T-cell (primary cell): ENCODE measurements at regions of chr10 and their contacts with region 1.

Region 1: GRCh38 chr10:99888622-99889021 is 106.2 kb downstream of the ABCC2 start:
- DNase-seq: no peak
- ATAC-seq: no peak
- H3K4me3 ChIP-seq: no peak overlapping the region
- H3K4me3 Mint-ChIP-seq: no peak overlapping the region
- H3K27ac ChIP-seq: no peak overlapping the region
- H3K27ac Mint-ChIP-seq: no peak overlapping the region
- H3K4me1 ChIP-seq: no peaks in the 10 kb centered on the region
- H3K4me1 Mint-ChIP-seq: no peaks in the 10 kb centered on the region
- H3K27me3 ChIP-seq: no peaks in the 10 kb centered on the region
- H3K27me3 Mint-ChIP-seq: no peaks in the 10 kb centered on the region

Region 2: DNA sequence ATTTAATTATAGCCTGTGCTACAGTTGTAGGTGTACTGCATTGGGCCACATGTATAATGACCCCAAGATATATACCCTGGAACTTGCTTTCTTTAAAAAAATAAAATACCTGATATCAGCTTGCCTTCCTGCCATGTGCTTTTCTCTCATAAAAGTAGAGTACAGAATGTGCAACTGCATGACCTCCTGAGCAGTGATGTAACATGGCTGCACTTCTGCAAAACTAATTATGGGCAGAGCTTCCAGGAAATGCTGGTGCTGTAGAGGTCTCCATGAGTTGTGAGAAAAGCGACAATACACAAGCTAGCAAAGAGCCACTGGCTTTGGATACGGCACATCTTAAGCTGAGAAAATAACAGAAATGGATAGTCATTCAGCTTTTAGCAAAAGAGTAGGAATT is 303.7 kb after region 1 on chr10:
- CTCF ChIA-PET with region 1: no interaction called
- POLR2A ChIA-PET with region 1: interaction called in 1 of 2 experiments, 15 read pairs
- DNase-seq: no peak
- ATAC-seq: no peak
- H3K4me3 ChIP-seq: no peak overlapping the region
- H3K4me3 Mint-ChIP-seq: no peak overlapping the region
- H3K27ac ChIP-seq: no peak overlapping the region
- H3K27ac Mint-ChIP-seq: no peak overlapping the region
- H3K4me1 ChIP-seq: peaks cover 0 to 3% of the 10 kb centered on the region in 2 experiments
- H3K4me1 Mint-ChIP-seq: peaks cover 22 to 26% (median 25%) of the 10 kb centered on the region in 3 donors
- H3K27me3 ChIP-seq: no peaks in the 10 kb centered on the region
- H3K27me3 Mint-ChIP-seq: no peaks in the 10 kb centered on the region